A549 (cell line): ENCODE measurements at regions of chr16 and their contacts with region 1.

Region 1: GRCh38 chr16:5621826-5622225 is 524.2 kb upstream of the EEF2KMT start:
- DNase-seq: no peak
- ATAC-seq: no peak
- H3K4me3 ChIP-seq: no peak overlapping the region
- H3K27ac ChIP-seq: no peak overlapping the region
- H3K4me1 ChIP-seq: no peaks in the 10 kb centered on the region
- CTCF ChIP-seq: no peak
- EP300 ChIP-seq: no peak
- POLR2A ChIP-seq: no peak
- RAD21 ChIP-seq: no peak

Region 2: GRCh38 chr16:5633845-5634440 is 12.1 kb after region 1 on chr16:
- CTCF ChIA-PET with region 1: interaction called, 31 read pairs
- POLR2A ChIA-PET with region 1: no interaction called
- DNase-seq: peak; percentile 45 to 51
- ATAC-seq: peak; percentile 34 to 63; a peak in 3 of 6 replicates
- H3K4me3 ChIP-seq: no peak overlapping the region
- H3K27ac ChIP-seq: no peak overlapping the region
- H3K4me1 ChIP-seq: no peaks in the 10 kb centered on the region
- CTCF ChIP-seq: peak; percentile 44
- EP300 ChIP-seq: no peak
- POLR2A ChIP-seq: no peak
- RAD21 ChIP-seq: peak; percentile 14 to 32; a peak in 1 of 5 replicates